ENCODE measurements at regions of chr1 and their contacts with region 1.

Region 1: DNA sequence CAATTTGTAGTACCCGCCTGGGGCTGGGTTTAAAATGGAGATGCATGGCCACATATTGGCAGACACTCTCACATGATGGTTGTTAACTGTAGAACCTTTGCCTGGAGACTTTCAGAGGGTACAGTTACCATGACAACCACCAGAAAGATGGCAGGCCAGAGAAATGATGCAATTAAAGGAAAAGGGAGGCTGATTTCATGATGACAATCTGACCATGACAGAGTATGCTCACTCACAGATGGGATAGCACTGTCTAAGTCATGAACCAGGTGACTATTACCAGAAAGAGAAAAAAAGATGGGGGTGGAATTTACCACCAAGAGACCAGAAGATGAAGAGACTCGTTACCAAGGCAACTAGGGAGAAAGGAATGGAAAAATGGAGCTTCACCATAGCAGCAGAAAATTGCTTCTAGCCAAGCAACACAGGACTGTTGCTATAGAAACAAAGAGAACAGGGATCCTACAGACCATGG is 3.5 kb upstream of the TRIT1 start:
- DNase-seq: no peak
- ATAC-seq: no peak
- H3K4me3 ChIP-seq: no peak overlapping the region
- H3K27ac ChIP-seq: no peak overlapping the region
- H3K4me1 ChIP-seq: peaks cover 0 to 27% (median 9%) of the 10 kb centered on the region in 12 donors
- H3K27me3 ChIP-seq: peaks cover 0 to 17% (median 0%) of the 10 kb centered on the region in 9 donors
- CTCF ChIP-seq: no peak
- POLR2A ChIP-seq: no peak

Region 2: DNA sequence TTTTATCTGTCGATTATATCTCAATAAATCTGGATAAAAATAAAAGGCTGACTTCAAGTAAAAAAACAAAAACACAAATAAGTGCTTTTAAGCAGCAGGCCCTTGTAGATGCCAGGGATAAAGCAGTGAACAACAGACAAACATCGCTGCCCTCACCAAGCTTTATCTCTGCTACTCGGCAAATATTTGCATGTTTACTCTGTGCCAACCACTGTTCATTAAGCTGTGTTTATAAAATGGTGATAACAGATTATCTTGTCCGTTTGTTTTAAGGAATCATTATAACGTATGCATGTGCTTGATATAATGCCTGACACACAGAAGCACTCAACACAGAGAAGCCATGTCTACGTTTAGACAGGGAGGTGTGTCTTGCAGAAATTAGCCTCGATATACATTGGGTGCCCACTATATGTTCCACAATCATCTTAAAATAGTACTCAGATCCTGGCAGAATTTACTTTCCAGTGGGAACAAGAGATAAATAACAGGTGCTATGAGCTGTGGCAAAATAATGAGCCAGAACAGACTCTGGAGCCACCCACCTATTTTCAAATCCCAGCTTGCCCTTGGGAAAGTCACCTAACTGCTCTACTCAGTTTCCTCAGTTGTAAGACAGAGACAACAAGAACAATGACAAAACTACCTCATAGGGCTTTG is 50.7 kb before region 1 on chr1:
- intact Hi-C with region 1: loop called in 1 of 10 experiments (anchors 5 kb)
- DNase-seq: no peak
- ATAC-seq: no peak
- H3K4me3 ChIP-seq: no peak overlapping the region
- H3K27ac ChIP-seq: no peak overlapping the region
- H3K4me1 ChIP-seq: no peaks in the 10 kb centered on the region
- H3K27me3 ChIP-seq: no peaks in the 10 kb centered on the region
- CTCF ChIP-seq: no peak
- POLR2A ChIP-seq: no peak

Region 3: DNA sequence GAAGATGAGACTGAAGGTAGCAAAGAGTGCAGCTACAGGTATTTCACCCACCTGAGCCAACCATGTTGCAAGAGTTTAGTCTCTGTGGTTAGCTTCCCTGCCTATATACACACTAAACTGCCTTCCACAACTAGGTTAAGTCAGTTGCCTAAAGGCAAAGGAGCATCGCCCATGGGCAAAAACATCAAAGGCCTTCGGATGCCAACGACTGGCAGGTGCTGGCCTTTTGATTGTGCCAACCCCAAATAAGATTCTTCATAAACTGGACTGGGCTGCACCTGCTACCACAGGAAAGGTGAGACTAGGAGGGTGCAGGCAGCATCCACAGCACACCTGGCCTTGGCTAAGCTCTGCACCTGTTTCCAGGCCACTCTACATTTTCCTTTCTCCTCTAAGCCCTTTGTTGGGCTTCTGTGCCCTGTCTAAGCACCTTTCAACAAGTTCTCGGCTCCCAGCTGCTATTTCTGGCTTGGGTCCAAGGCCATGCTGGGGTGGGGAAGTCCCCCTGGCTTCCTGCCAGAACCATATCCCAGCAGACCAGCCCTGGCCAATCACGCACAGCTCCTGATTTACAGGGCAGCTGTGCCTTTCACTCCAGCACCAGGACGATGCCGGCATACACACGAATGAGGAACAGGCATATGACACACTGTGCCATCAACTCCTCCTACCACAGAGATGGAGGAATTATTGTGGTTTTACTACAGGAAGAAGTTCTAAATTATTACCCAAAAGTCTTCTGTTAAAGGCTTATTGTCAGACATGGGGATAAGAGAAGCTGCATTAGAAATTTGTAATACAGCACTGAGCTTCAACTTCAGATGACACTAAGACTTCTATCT is 41.3 kb before region 1 on chr1:
- intact Hi-C with region 1: loop called in 1 of 10 experiments (anchors 5 kb)
- DNase-seq: peak; percentile 86 to 92 (median 90)
- ATAC-seq: peak; percentile 92 to 98 (median 97)
- H3K4me3 ChIP-seq: no peak overlapping the region
- H3K27ac ChIP-seq: peak overlapping the region in 2 of 12 donors; percentile 19 to 80
- H3K4me1 ChIP-seq: peaks cover 0 to 46% (median 13%) of the 10 kb centered on the region in 12 donors
- H3K27me3 ChIP-seq: no peaks in the 10 kb centered on the region
- CTCF ChIP-seq: no peak
- POLR2A ChIP-seq: no peak

Measured in heart left ventricle (tissue), 16 donors.